ENCODE measurements at regions of chr10 and their contacts with region 1.

Region 1: DNA sequence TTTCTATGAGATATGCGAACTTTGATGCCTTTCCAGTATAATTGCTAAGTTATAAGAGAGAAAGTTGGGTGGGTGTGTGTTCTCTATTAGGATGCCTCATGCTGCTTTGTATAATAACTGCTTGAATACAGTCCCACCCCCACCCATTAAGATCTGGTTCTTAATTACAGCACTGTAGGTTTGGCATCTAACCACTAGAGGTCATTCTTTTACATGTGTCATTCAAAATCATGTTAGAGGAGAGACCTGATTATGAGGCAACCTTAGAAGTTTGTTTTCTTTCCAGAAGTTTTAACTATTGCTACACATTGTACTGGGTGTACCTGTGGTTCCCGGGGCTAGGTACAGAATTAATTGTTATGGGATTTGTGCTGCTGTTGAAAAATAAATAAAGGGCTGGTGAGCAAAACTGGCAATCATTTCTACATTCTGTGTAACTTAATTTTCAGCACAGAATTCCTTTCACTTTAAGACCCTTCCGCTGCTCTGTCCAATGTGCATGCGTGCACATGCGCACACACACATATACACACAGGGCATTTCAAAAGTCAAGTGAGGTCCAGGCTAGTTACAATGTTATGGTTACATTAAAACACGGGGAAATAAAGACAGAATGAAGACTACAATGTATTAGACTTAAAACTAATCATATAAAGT is 1156.3 kb downstream of the SORCS3 start:
- DNase-seq: peak in 4 of 9 donors; percentile 9 to 23 (median 19)
- ATAC-seq: no peak
- H3K4me3 ChIP-seq: no peak overlapping the region
- H3K4me3 Mint-ChIP-seq: no peak overlapping the region
- H3K27ac ChIP-seq: no peak overlapping the region
- H3K27ac Mint-ChIP-seq: no peak overlapping the region
- H3K4me1 ChIP-seq: no peaks in the 10 kb centered on the region
- H3K4me1 Mint-ChIP-seq: peaks cover 0 to 3% (median 0%) of the 10 kb centered on the region in 7 donors
- H3K27me3 ChIP-seq: no peaks in the 10 kb centered on the region
- H3K27me3 Mint-ChIP-seq: peaks cover 0 to 4% (median 0%) of the 10 kb centered on the region in 5 donors

Region 2: GRCh38 chr10:105756386-105756785 is 41.0 kb before region 1 on chr10:
- CTCF ChIA-PET with region 1: no interaction called
- POLR2A ChIA-PET with region 1: no interaction called
- intact Hi-C with region 1: loop called in 1 of 2 experiments (anchors 2 kb)
- DNase-seq: no peak
- ATAC-seq: no peak
- H3K4me3 ChIP-seq: no peak overlapping the region
- H3K4me3 Mint-ChIP-seq: no peak overlapping the region
- H3K27ac ChIP-seq: no peak overlapping the region
- H3K27ac Mint-ChIP-seq: no peak overlapping the region
- H3K4me1 ChIP-seq: no peaks in the 10 kb centered on the region
- H3K4me1 Mint-ChIP-seq: no peaks in the 10 kb centered on the region
- H3K27me3 ChIP-seq: no peaks in the 10 kb centered on the region
- H3K27me3 Mint-ChIP-seq: peaks cover 0 to 12% (median 2%) of the 10 kb centered on the region in 5 donors

Region 3: DNA sequence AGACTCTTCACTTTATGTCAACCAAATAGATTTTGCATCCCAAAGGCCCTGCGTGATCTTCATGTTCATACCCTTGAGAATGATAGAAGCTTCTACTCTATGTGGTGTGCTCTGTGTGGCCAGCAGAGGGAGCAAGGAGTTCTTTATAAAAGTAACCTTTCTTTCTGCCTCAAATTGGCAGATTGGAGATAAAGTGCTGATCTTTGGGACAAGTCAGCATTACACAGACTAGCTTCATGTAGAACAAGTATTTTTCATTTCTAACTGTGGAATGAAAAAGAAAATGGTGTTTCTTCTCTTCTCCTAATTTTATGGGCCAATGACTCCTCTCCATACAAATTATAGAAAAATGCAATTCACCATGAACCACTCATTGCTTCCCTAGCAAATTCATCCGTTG is 153.0 kb after region 1 on chr10:
- CTCF ChIA-PET with region 1: no interaction called
- POLR2A ChIA-PET with region 1: no interaction called
- intact Hi-C with region 1: loop called in 1 of 2 experiments (anchors 1 kb)
- DNase-seq: peak in 5 of 9 donors; percentile 2 to 8 (median 5)
- ATAC-seq: no peak
- H3K4me3 ChIP-seq: no peak overlapping the region
- H3K4me3 Mint-ChIP-seq: no peak overlapping the region
- H3K27ac ChIP-seq: no peak overlapping the region
- H3K27ac Mint-ChIP-seq: no peak overlapping the region
- H3K4me1 ChIP-seq: no peaks in the 10 kb centered on the region
- H3K4me1 Mint-ChIP-seq: peaks cover 0 to 4% (median 0%) of the 10 kb centered on the region in 7 donors
- H3K27me3 ChIP-seq: no peaks in the 10 kb centered on the region
- H3K27me3 Mint-ChIP-seq: no peaks in the 10 kb centered on the region

Region 4: DNA sequence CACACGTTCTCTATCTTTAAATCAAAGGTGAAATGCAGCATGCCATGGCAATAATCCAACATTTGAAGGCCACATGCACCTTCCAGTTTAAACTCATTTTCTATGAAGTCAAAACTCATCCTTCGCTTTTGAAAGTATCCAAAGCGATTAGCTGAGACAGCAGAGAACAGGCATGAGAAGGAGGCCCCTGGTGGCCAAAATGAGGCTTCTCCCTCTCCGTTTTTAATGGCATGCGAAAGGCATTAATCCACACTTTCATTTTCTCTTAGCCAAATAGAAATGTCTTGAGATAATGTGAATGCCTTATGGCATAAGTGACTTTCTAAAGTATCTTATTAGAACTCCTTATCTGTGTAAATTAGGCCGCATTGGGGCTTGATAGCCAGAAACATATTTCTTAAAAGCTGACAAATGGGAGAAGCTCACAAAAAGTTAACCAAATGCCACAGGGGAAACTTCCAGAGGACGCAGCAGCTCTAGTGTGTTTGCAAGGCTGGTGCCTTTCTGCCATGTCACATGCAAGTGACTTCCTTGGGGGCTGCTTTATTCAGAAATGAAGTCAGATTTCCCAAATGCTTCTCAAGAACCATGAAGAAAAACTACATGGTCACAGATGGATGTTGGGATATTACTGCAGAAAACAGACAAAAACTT is 177.6 kb after region 1 on chr10:
- CTCF ChIA-PET with region 1: no interaction called
- POLR2A ChIA-PET with region 1: no interaction called
- intact Hi-C with region 1: loop called in 1 of 2 experiments (anchors 1 kb)
- DNase-seq: no peak
- ATAC-seq: no peak
- H3K4me3 ChIP-seq: no peak overlapping the region
- H3K4me3 Mint-ChIP-seq: peak overlapping the region in 2 of 10 donors; percentile 23 to 71
- H3K27ac ChIP-seq: no peak overlapping the region
- H3K27ac Mint-ChIP-seq: no peak overlapping the region
- H3K4me1 ChIP-seq: no peaks in the 10 kb centered on the region
- H3K4me1 Mint-ChIP-seq: peaks cover 0 to 11% (median 0%) of the 10 kb centered on the region in 7 donors
- H3K27me3 ChIP-seq: no peaks in the 10 kb centered on the region
- H3K27me3 Mint-ChIP-seq: peaks cover 0 to 8% (median 0%) of the 10 kb centered on the region in 5 donors

Region 5: DNA sequence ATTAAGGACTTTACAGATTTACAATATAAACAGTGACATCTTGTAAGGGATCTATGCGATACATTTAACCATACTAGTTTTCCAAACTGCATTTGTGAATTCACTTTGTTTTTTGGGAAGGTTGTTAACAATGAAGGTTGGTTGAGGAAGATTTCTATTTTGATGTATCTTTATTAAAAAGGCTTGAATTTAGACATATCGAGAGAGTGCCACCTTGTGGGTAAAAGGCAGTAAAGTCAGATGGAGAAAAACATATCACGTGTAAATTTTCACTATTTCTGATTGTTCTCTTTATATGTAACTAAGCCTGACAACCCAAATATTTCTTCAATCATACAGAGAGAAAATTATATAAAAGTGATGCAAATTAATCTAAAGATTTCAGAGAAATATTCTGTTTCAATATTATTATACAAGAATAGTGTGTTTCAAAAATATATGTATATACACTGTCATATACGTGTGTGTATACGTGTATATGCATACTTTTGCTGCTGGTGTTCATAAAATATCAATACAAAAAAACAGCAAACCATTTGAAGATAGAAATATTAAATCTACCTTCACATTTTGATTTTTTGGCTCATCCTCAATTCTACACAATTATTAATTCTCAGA is 378.5 kb after region 1 on chr10:
- CTCF ChIA-PET with region 1: no interaction called
- POLR2A ChIA-PET with region 1: no interaction called
- intact Hi-C with region 1: loop called in 1 of 2 experiments (anchors 5 kb)
- DNase-seq: no peak
- ATAC-seq: no peak
- H3K4me3 ChIP-seq: no peak overlapping the region
- H3K4me3 Mint-ChIP-seq: no peak overlapping the region
- H3K27ac ChIP-seq: no peak overlapping the region
- H3K27ac Mint-ChIP-seq: no peak overlapping the region
- H3K4me1 ChIP-seq: no peaks in the 10 kb centered on the region
- H3K4me1 Mint-ChIP-seq: no peaks in the 10 kb centered on the region
- H3K27me3 ChIP-seq: no peaks in the 10 kb centered on the region
- H3K27me3 Mint-ChIP-seq: peaks cover 0 to 6% (median 0%) of the 10 kb centered on the region in 5 donors

Region 6: DNA sequence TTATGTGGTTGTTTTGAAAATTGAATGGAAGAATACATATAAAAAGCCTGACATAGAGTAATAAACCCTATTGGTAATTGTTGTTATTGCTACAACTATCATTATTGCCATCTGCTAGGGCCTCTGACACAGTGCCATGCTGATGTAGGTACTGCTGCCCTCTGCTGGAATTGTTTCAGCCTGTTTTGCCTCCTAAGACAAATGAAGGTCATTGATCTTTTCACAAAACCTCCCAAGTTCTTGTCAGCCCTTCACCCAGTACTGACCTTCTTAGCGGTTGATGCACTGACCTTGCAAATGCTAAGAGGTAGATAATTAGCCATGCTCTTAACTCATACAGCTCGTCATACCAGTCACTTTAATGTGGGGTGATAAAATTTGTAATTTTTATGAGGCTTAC is 391.9 kb after region 1 on chr10:
- CTCF ChIA-PET with region 1: no interaction called
- POLR2A ChIA-PET with region 1: no interaction called
- intact Hi-C with region 1: loop called in 1 of 2 experiments (anchors 1 kb)
- DNase-seq: peak in 2 of 9 donors; percentile 1 to 2
- ATAC-seq: no peak
- H3K4me3 ChIP-seq: no peak overlapping the region
- H3K4me3 Mint-ChIP-seq: no peak overlapping the region
- H3K27ac ChIP-seq: no peak overlapping the region
- H3K27ac Mint-ChIP-seq: no peak overlapping the region
- H3K4me1 ChIP-seq: no peaks in the 10 kb centered on the region
- H3K4me1 Mint-ChIP-seq: no peaks in the 10 kb centered on the region
- H3K27me3 ChIP-seq: no peaks in the 10 kb centered on the region
- H3K27me3 Mint-ChIP-seq: no peaks in the 10 kb centered on the region